Heart right ventricle (tissue), 16 donors: ENCODE measurements at regions of chr19 and their contacts with region 1.

Region 1: DNA sequence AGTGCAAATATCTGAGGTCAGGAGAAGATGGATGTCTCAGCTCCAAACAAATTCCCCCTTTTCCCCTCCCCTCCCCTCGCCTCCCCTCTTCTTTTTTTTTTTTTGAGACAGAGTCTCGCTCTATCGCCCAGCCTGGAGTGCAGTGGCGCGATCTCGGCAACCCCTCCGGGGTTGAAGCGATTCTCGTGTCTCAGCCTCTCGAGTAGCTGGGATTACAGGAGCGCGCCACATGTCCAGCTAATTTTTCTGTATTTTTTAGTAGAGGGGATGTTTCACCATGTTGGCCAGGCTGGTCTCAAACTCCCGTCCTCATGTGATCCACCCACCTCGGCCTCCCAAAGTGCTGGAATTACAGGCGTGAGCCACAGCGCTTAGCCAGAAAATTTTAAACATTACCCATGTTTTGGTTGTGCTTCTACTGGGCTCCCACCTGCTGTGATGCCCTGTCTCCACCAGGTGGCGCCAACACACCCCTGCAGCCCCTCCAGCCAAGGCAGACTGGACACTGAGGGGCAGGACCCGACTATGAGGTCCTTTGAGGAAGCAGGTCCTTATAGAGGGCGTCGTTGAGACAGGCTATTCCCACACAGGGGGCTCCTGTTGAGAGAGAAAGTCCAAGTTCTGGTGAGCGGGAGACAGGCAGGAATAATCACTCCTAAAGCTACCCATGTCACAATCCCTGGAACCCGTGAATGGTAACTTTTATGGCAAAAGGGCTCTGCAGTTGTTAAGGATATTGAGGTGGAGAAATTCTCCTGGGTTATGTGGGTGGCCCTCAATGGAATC is 6.3 kb downstream of the ERICH4 start:
- DNase-seq: peak; percentile 77 to 82
- ATAC-seq: peak; percentile 86 to 95 (median 92)
- H3K4me3 ChIP-seq: peak overlapping the region in 6 of 10 donors; percentile 28 to 41 (median 34)
- H3K27ac ChIP-seq: no peak overlapping the region
- H3K4me1 ChIP-seq: peaks cover 0 to 25% (median 11%) of the 10 kb centered on the region in 9 donors
- H3K27me3 ChIP-seq: peaks cover 0 to 12% (median 4%) of the 10 kb centered on the region in 7 donors
- CTCF ChIP-seq: peak; percentile 95 to 99 (median 98)

Region 2: DNA sequence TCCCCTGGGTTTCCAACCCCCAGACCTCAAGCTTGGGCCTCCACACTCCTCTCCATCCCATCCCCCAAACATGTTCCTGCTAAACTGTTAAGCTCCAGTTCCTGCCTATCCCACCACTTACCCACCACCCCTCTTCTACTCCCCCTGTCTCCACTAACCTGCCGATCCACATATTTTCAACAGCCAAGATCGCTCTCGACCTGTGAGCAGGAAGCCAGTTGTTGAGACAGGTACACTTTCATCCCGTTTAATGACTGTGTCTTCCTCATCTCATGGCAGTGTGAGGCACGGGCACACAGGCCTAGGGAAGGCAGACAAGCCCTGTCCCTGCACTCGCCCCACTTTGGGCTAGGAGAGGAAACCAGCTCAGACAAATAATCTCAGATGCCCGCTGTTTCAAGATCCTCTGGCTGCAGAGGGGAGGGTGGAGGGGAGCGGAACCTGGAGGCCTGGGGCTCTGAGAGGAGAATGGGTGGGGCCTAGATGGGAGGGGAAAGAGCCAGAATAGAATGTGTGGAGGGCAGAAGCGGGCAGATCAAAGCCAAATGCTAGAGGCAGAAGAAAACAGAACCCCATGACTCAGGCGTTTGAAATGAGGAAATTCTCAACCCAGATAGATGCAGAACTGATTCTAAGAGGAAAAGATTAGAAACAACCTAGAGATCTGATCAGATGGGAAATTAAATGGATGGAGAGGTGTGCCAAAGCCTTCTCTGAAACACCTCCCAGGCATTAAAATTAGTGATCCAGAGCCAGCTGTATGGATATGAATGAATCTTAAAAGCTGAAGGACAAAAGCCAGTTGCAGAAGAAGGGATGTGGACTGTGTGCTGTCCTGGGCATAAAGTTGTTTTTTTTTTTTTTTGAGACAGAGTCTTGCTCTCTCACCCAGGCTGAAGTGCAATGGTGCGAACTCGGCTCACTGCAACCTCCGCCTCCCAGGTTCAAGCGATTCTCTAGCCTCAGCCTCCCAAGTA is 273.2 kb before region 1 on chr19:
- intact Hi-C with region 1: no loop called
- DNase-seq: no peak
- ATAC-seq: peak in 6 of 8 donors; percentile 38 to 82 (median 64)
- H3K4me3 ChIP-seq: peak overlapping the region in 1 of 10 donors; percentile 31
- H3K27ac ChIP-seq: peak overlapping the region in 1 of 10 donors; percentile 69
- H3K4me1 ChIP-seq: peaks cover 0 to 18% (median 0%) of the 10 kb centered on the region in 9 donors
- H3K27me3 ChIP-seq: peaks cover 0 to 11% (median 4%) of the 10 kb centered on the region in 7 donors
- CTCF ChIP-seq: no peak

Region 3: GRCh38 chr19:41479757-41480191 is 30.5 kb after region 1 on chr19:
- intact Hi-C with region 1: loop called in 1 of 10 experiments (anchors 5 kb)
- DNase-seq: peak; percentile 50 to 69
- ATAC-seq: peak; percentile 64 to 92 (median 87)
- H3K4me3 ChIP-seq: peak overlapping the region in 5 of 10 donors; percentile 25 to 51 (median 44)
- H3K27ac ChIP-seq: peak overlapping the region; percentile 34 to 87 (median 81)
- H3K4me1 ChIP-seq: peaks cover 3 to 69% (median 17%) of the 10 kb centered on the region in 9 donors
- H3K27me3 ChIP-seq: peaks cover 0 to 34% (median 6%) of the 10 kb centered on the region in 7 donors
- CTCF ChIP-seq: no peak

Region 4: DNA sequence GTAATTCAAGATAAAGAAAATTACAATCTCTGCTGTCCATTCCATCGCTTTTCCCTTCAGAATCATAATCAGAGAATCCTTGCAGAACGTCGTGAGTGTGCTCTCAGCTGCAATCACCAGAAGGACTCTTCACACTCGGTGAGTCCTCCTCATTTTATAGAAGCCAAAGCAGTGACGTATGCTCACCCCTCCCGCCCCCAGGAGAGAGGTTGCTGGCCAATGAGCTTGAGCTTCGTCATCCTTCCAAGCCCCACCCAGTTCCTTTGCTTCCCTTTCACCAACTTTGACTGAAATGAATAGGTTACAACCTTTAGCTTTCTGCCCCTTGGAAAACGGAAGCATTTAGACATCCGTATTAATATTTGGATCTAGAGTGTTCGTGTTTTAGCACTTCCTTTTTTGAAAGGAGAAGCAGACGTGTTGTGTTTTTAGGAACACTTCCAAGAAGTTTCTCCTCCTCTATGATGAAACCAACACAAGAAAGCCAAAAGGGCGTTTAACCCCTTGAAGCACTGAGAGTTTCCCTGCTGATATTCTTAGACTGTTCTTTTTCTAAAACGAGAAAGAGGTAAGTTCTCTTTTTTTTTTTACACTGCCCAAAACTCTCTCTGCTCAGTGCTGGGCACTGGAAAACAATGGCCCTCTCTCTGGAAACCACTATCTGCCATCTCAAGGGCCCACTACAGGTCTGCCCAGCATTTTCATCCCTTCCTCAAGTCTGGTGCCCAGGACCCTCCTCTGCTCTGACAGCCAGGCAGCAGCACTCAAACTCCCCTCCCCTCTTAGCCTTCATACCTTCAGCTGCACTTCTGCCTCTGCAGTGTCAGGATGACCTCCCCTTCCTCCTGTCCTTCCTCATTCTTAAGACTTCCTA is 82.4 kb after region 1 on chr19:
- intact Hi-C with region 1: loop called in 4 of 10 experiments (anchors 2 to 5 kb)
- DNase-seq: peak; percentile 69 to 92
- ATAC-seq: peak; percentile 92 to 96 (median 96)
- H3K4me3 ChIP-seq: peak overlapping the region in 6 of 10 donors; percentile 17 to 37 (median 26)
- H3K27ac ChIP-seq: peak overlapping the region; percentile 43 to 94 (median 78)
- H3K4me1 ChIP-seq: peaks cover 0 to 65% (median 16%) of the 10 kb centered on the region in 9 donors
- H3K27me3 ChIP-seq: peaks cover 0 to 5% (median 2%) of the 10 kb centered on the region in 7 donors
- CTCF ChIP-seq: no peak

Region 5: GRCh38 chr19:41541990-41542584 is 92.8 kb after region 1 on chr19:
- intact Hi-C with region 1: loop called in 5 of 10 experiments (anchors 1 to 5 kb)
- DNase-seq: peak; percentile 53 to 67
- ATAC-seq: no peak
- H3K4me3 ChIP-seq: no peak overlapping the region
- H3K27ac ChIP-seq: no peak overlapping the region
- H3K4me1 ChIP-seq: peaks cover 0 to 29% (median 8%) of the 10 kb centered on the region in 9 donors
- H3K27me3 ChIP-seq: peaks cover 0 to 32% (median 4%) of the 10 kb centered on the region in 7 donors
- CTCF ChIP-seq: peak; percentile 27 to 83 (median 68)

Region 6: GRCh38 chr19:41563854-41564514 is 114.7 kb after region 1 on chr19:
- intact Hi-C with region 1: loop called in 5 of 10 experiments (anchors 1 to 10 kb)
- DNase-seq: no peak
- ATAC-seq: peak in 1 of 8 donors; percentile 38
- H3K4me3 ChIP-seq: peak overlapping the region in 7 of 10 donors; percentile 4 to 28 (median 11)
- H3K27ac ChIP-seq: no peak overlapping the region
- H3K4me1 ChIP-seq: peaks cover 3 to 32% (median 14%) of the 10 kb centered on the region in 9 donors
- H3K27me3 ChIP-seq: peaks cover 11 to 78% (median 57%) of the 10 kb centered on the region in 7 donors
- CTCF ChIP-seq: no peak

Region 7: GRCh38 chr19:41570639-41571112 is 121.4 kb after region 1 on chr19:
- intact Hi-C with region 1: loop called in 8 of 10 experiments (anchors 1 to 10 kb)
- DNase-seq: peak; percentile 76 to 83
- ATAC-seq: peak; percentile 87 to 97 (median 94)
- H3K4me3 ChIP-seq: no peak overlapping the region
- H3K27ac ChIP-seq: no peak overlapping the region
- H3K4me1 ChIP-seq: peaks cover 0 to 7% (median 0%) of the 10 kb centered on the region in 9 donors
- H3K27me3 ChIP-seq: peaks cover 0 to 59% (median 31%) of the 10 kb centered on the region in 7 donors
- CTCF ChIP-seq: peak; percentile 63 to 93 (median 89)